B cell (primary cell): ENCODE measurements at regions of chr11 and their contacts with region 1.

Region 1: DNA sequence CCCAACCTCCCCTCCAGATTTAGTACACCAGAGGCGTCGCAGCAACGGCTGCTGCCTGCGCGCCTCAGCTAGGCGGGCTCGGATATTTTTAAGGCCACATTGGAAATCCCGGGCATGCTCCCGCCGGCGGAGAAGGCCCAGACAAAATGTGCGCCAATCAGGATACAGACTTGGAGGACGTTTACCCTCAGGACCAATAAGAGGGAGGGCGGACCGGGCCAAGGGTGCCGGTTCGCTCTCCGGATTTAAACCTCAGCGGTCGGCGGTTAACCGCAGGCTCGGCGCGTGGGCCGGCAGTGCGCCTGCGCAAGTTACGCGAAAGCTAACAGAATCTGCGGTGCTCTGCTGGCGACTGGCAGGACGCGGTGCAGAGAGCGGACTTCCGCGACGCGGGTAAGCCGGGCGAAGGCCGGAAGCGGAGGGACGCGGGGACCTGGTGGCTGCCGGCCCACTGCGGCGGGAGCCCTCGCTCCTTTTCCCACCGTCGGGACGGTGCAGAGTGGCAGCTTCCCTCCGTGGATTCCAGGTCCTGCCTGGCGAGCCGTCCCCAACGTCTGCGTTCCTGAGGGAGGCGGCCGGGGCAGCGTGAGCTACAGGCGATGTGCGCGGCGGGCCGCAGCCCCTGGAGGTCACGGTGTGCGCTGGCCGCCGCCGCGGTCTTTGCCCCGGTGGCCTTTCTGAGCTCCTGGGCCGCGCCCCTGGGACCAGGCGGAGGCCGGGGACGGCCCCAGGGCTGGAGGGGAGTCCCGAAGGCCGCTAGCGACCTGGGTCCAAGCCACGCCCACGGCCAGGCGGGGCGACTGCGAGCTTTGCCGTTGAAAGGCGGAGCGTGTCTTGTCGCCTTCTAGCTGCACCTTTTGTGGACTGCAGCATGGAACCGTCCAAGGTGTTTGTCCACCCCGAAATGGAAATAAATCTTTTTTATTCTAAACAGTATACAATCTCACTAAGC is at the start of gene HYLS1:
- DNase-seq: peak; percentile 98
- ATAC-seq: peak; percentile 81
- H3K4me3 ChIP-seq: peak within 1 kb of the TSS; percentile 71 to 97 (median 90)
- H3K4me3 Mint-ChIP-seq: peak within 1 kb of the TSS; percentile 96
- H3K27ac ChIP-seq: peak within 1 kb of the TSS; percentile 90 to 94
- H3K27ac Mint-ChIP-seq: peak within 1 kb of the TSS; percentile 99
- H3K4me1 ChIP-seq: peaks cover 5 to 19% of the 10 kb centered on the region in 2 donors
- H3K4me1 Mint-ChIP-seq: peaks cover 24% of the 10 kb centered on the region
- H3K27me3 ChIP-seq: no peaks in the 10 kb centered on the region
- H3K27me3 Mint-ChIP-seq: no peaks in the 10 kb centered on the region
- CTCF ChIP-seq: no peak
- total RNA-seq, gene HYLS1: 9.4 and 9.9 TPM in 2 replicates

Region 2: GRCh38 chr11:125111343-125112207 is 776.1 kb before region 1 on chr11 and contains the start of gene TMEM218:
- CTCF ChIA-PET with region 1: no interaction called
- POLR2A ChIA-PET with region 1: no interaction called
- intact Hi-C with region 1: loop called (anchors 5 kb)
- DNase-seq: peak; percentile 100
- ATAC-seq: peak; percentile 95
- H3K4me3 ChIP-seq: peak within 1 kb of the TSS; percentile 66 to 94 (median 80)
- H3K4me3 Mint-ChIP-seq: peak within 1 kb of the TSS; percentile 98
- H3K27ac ChIP-seq: peak within 1 kb of the TSS; percentile 79
- H3K27ac Mint-ChIP-seq: peak within 1 kb of the TSS; percentile 99
- H3K4me1 ChIP-seq: peaks cover 8 to 14% of the 10 kb centered on the region in 2 donors
- H3K4me1 Mint-ChIP-seq: peaks cover 20% of the 10 kb centered on the region
- H3K27me3 ChIP-seq: peaks cover 0 to 2% (median under 1%) of the 10 kb centered on the region in 4 experiments
- H3K27me3 Mint-ChIP-seq: peaks cover under 1% of the 10 kb centered on the region
- CTCF ChIP-seq: no peak
- total RNA-seq, gene TMEM218: 20.7 TPM in 2 replicates

Region 3: DNA sequence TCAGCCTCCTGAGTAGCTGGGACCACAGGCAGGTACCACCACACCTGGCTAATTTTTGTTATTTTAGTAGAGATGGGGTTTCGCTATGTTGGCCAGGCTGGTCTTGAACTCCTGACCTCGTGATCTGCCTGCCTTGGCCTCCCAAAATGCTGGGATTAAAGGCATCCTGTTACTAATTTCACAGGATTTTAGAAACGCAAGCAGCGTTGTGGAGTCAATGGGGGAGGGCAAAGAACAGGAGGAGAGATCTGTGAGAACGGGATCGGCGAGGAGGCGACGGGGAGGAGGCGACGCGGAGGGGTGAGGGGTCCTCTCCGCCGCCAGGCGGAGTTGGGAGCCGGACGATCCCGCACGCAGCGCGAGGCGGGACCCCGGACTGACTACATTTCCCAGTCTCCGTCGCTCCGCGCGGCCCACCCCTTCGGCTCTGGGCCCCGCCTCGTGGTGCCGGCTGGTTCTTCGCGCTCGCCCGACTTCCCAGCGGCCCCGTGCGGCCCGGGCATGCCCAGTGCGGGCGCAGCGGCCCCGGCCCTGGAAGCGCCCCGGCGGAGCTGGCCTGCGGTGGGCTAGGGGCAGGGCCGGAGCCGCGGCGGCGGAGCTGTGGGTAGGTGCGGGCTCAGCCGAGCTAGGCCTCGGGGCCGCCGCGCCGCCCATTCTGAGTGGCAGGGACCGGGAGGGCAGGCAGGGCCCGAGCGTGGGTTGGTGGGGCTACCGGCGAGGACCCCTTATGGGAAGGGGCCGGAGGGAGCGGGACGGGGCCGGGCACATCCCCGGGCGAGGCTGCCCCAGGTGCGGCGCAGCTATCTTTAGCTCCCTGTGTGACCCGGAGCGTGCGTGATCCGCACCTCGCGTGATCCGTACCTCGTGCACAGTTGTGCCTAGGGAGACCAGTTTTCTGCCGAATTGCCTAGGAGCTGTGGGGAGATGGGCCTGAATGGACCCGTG is 318.4 kb before region 1 on chr11 and contains the start of gene EI24:
- CTCF ChIA-PET with region 1: interaction called, 4 read pairs
- POLR2A ChIA-PET with region 1: interaction called, 3 read pairs
- intact Hi-C with region 1: loop called (anchors 1 kb)
- DNase-seq: peak; percentile 93
- ATAC-seq: peak; percentile 99
- H3K4me3 ChIP-seq: peak within 1 kb of the TSS; percentile 68 to 91 (median 80)
- H3K4me3 Mint-ChIP-seq: peak within 1 kb of the TSS; percentile 96
- H3K27ac ChIP-seq: peak within 1 kb of the TSS; percentile 52 to 86
- H3K27ac Mint-ChIP-seq: peak within 1 kb of the TSS; percentile 91
- H3K4me1 ChIP-seq: peaks cover 11 to 16% of the 10 kb centered on the region in 2 donors
- H3K4me1 Mint-ChIP-seq: peaks cover 18% of the 10 kb centered on the region
- H3K27me3 ChIP-seq: no peaks in the 10 kb centered on the region
- H3K27me3 Mint-ChIP-seq: no peaks in the 10 kb centered on the region
- CTCF ChIP-seq: peak; percentile 68
- total RNA-seq, gene EI24: 20.2 and 21.9 TPM in 2 replicates

Region 4: DNA sequence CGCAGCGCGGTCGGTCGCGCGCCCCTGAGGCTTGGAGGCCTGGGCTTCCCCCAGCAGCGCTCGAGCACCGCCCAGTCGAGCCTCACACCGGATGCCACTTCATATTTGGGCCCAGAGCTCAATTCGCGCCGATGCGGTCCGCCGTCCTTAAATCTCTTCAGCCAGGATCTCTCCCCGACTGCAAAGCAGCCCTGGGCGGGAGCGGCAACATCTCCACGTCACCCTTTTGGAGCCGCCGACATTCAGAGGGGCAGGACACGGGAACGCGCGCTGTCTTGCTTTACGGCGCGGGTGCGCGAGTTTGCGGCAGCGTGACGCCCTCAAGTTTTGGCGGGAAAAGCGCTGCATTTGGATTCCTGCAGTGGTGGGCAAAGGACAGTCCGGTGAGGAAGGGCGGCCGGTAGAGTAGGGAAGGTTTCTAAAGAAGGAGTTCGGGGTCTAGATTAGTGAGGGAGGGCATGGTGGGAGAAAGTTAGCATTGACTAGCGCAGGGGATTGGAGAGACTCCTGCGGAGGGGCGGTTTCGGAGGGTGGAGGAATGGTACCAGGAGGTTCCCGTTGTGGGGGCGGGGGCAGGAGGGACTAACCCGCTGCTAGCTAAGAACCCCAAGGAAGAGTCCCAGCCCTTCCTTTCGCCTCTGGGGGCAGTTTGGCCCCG is 261.9 kb before region 1 on chr11:
- CTCF ChIA-PET with region 1: no interaction called
- POLR2A ChIA-PET with region 1: interaction called, 6 read pairs
- intact Hi-C with region 1: loop called (anchors 1 kb)
- DNase-seq: peak; percentile 90
- ATAC-seq: peak; percentile 90
- H3K4me3 ChIP-seq: peak overlapping the region; percentile 81 to 96 (median 94)
- H3K4me3 Mint-ChIP-seq: peak overlapping the region; percentile 95
- H3K27ac ChIP-seq: peak overlapping the region; percentile 97 to 98
- H3K27ac Mint-ChIP-seq: peak overlapping the region; percentile 98
- H3K4me1 ChIP-seq: peaks cover 11 to 18% of the 10 kb centered on the region in 2 donors
- H3K4me1 Mint-ChIP-seq: peaks cover 14% of the 10 kb centered on the region
- H3K27me3 ChIP-seq: no peaks in the 10 kb centered on the region
- H3K27me3 Mint-ChIP-seq: no peaks in the 10 kb centered on the region
- CTCF ChIP-seq: no peak

Region 5: GRCh38 chr11:125902927-125903710 is 15.5 kb after region 1 on chr11 and contains the start of gene PUS3:
- CTCF ChIA-PET with region 1: interaction called, 14 read pairs
- POLR2A ChIA-PET with region 1: interaction called, 17 read pairs
- intact Hi-C with region 1: loop called (anchors 1 kb)
- DNase-seq: peak; percentile 89
- ATAC-seq: peak; percentile 96
- H3K4me3 ChIP-seq: peak within 1 kb of the TSS; percentile 67 to 98 (median 81)
- H3K4me3 Mint-ChIP-seq: peak within 1 kb of the TSS; percentile 97
- H3K27ac ChIP-seq: peak within 1 kb of the TSS; percentile 45 to 75
- H3K27ac Mint-ChIP-seq: peak within 1 kb of the TSS; percentile 82
- H3K4me1 ChIP-seq: peaks cover 23 to 26% of the 10 kb centered on the region in 2 donors
- H3K4me1 Mint-ChIP-seq: peaks cover 24% of the 10 kb centered on the region
- H3K27me3 ChIP-seq: peaks cover 0 to 25% (median 18%) of the 10 kb centered on the region in 4 experiments
- H3K27me3 Mint-ChIP-seq: peaks cover 32% of the 10 kb centered on the region
- CTCF ChIP-seq: no peak
- total RNA-seq, gene PUS3: 7.8 and 8.1 TPM in 2 replicates

Region 6: DNA sequence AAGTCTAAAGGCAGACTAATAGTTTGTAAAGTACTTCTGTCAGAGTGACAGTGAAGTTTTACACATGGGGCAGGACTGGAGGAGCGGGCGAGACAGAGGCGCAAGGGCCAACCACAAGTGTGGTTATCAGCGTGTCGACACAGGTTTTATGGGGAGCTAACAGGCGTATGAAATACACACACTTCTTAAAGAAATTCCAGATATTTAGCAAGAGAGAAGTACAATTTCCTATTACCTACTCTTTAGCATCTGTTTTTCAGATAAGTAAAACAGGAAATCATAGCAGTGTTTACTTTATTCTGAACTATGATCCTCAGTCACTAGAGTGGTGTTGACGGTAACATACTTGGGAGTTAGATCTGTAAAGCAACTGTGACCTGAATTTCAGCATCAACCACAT is 80.7 kb after region 1 on chr11:
- CTCF ChIA-PET with region 1: no interaction called
- POLR2A ChIA-PET with region 1: no interaction called
- intact Hi-C with region 1: no loop called
- DNase-seq: no peak
- ATAC-seq: no peak
- H3K4me3 ChIP-seq: no peak overlapping the region
- H3K4me3 Mint-ChIP-seq: no peak overlapping the region
- H3K27ac ChIP-seq: no peak overlapping the region
- H3K27ac Mint-ChIP-seq: no peak overlapping the region
- H3K4me1 ChIP-seq: no peaks in the 10 kb centered on the region
- H3K4me1 Mint-ChIP-seq: no peaks in the 10 kb centered on the region
- H3K27me3 ChIP-seq: peaks cover 0 to 4% (median 0%) of the 10 kb centered on the region in 4 experiments
- H3K27me3 Mint-ChIP-seq: peaks cover 27% of the 10 kb centered on the region
- CTCF ChIP-seq: no peak

Region 7: GRCh38 chr11:126048198-126048597 is 160.5 kb after region 1 on chr11:
- CTCF ChIA-PET with region 1: no interaction called
- POLR2A ChIA-PET with region 1: no interaction called
- intact Hi-C with region 1: no loop called
- DNase-seq: no peak
- ATAC-seq: no peak
- H3K4me3 ChIP-seq: no peak overlapping the region
- H3K4me3 Mint-ChIP-seq: no peak overlapping the region
- H3K27ac ChIP-seq: no peak overlapping the region
- H3K27ac Mint-ChIP-seq: no peak overlapping the region
- H3K4me1 ChIP-seq: no peaks in the 10 kb centered on the region
- H3K4me1 Mint-ChIP-seq: no peaks in the 10 kb centered on the region
- H3K27me3 ChIP-seq: no peaks in the 10 kb centered on the region
- H3K27me3 Mint-ChIP-seq: peaks cover 19% of the 10 kb centered on the region
- CTCF ChIP-seq: no peak

Region 8: DNA sequence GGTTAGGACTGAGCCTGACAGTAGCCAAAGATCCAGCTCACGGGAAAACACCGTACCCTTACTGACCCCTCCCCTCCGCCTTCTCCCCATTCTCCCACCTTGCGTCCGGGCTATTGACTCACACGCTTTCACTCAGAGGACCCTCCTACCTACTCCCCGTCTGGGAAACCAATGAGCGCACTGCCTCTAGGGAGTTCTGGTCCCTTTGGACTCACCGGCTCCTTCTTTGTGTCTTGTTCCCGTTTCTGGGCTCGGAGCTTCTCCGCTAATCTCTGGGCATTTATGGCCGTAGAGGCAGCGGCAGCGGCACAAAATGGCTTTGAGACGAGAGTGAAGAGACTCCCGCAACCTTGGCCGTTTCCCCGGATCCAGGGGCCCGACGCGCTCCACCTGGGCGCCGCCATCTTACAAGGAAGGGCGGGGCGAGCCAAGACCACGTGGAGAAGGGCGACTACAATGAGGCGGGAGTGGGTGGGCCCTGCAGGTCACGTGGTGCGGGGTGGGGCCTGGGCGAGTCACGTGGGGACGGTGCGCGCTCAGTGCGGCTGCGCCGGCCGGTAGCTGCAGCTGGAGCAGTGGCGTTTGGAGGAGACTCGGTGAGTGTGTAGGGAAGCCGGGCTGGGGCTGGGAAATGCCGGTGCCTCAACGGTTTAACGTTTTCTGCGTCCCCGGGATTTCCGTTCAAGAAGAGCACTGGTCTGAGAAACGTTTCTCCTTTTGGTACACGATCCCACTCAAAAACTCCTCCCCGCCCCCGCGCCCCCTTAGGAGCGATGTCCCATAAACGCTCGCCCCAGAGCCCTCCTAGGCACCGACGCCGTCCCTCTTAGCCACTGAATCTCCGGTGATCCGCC is 323.8 kb after region 1 on chr11 and contains the starts of genes FAM118B and RPUSD4:
- CTCF ChIA-PET with region 1: interaction called, 4 read pairs
- POLR2A ChIA-PET with region 1: interaction called, 4 read pairs
- intact Hi-C with region 1: loop called (anchors 1 kb)
- DNase-seq: peak; percentile 97
- ATAC-seq: peak; percentile 96
- H3K4me3 ChIP-seq: peak within 1 kb of the TSS; percentile 89 to 100 (median 99)
- H3K4me3 Mint-ChIP-seq: peak within 1 kb of the TSS; percentile 99
- H3K27ac ChIP-seq: peak within 1 kb of the TSS; percentile 72 to 86
- H3K27ac Mint-ChIP-seq: peak within 1 kb of the TSS; percentile 95
- H3K4me1 ChIP-seq: peaks cover 16 to 18% of the 10 kb centered on the region in 2 donors
- H3K4me1 Mint-ChIP-seq: peaks cover 29% of the 10 kb centered on the region
- H3K27me3 ChIP-seq: no peaks in the 10 kb centered on the region
- H3K27me3 Mint-ChIP-seq: no peaks in the 10 kb centered on the region
- CTCF ChIP-seq: no peak
- total RNA-seq, gene FAM118B: 12.8 and 14.1 TPM in 2 replicates
- total RNA-seq, gene RPUSD4: 48.8 and 50.4 TPM in 2 replicates